ENCODE measurements at regions of chr14 and their contacts with region 1.

Region 1: DNA sequence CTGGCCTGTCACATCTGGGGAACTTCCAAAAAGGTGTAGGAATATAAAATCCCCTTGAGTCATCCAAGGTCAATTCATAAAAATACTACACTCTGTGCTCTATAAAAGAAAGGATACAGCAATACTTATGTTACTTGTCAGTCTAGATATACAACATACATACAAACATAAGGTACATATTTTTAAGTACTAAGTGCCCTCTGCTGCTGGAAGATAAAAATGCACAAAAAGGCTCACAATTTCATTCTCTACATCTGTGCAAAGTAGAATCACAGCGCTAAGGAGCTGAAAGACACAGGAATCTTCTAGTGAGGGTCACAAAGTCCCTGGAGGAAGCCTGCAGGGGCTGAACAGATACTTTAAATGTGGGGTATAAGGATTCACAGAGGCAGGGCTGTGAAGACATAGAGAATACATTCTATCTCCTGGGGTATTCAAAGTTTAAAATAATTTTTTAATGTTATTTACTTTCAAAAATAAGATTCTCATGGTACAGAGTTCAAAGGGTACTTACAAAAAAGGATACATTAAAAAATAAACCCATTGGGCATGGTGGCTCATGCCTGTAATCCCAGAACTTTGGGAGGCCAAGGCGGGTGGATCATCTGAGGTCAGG is 10.2 kb upstream of the GOLGA5 start:
- DNase-seq: no peak
- H3K4me3 Mint-ChIP-seq: no peak overlapping the region
- H3K27ac Mint-ChIP-seq: no peak overlapping the region
- H3K4me1 Mint-ChIP-seq: peaks cover 25% of the 10 kb centered on the region
- H3K27me3 Mint-ChIP-seq: no peaks in the 10 kb centered on the region

Region 2: GRCh38 chr14:92686900-92687444 is 97.0 kb before region 1 on chr14:
- CTCF ChIA-PET with region 1: interaction called, 14 read pairs
- POLR2A ChIA-PET with region 1: no interaction called
- DNase-seq: peak; percentile 60
- H3K4me3 Mint-ChIP-seq: no peak overlapping the region
- H3K27ac Mint-ChIP-seq: no peak overlapping the region
- H3K4me1 Mint-ChIP-seq: peaks cover 3% of the 10 kb centered on the region
- H3K27me3 Mint-ChIP-seq: no peaks in the 10 kb centered on the region

Region 3: DNA sequence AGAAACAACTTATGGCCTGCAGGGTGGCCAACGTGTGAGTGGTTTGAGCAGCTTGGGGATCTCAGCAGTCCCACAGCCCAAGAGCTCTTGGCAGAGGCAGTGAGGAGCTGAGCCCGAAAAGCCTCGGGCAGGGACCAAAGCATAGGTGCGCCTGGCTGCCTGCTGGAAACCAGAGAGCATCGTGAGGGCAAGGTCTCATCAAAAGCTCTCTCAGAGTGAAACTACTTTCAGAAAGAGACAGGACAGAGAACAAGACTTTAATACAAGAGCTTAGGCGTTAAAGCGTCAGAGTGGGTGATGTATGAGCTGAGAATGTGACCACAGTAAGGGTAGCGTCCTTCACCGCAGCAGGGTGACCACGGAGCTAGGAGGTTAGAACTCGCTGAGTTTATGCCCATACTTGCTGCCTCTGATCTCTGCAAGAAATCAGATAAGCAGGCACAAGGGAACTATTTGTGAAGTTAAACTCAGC is 66.3 kb before region 1 on chr14:
- CTCF ChIA-PET with region 1: interaction called, 82 read pairs
- POLR2A ChIA-PET with region 1: interaction called, 4 read pairs
- DNase-seq: peak; percentile 34
- H3K4me3 Mint-ChIP-seq: no peak overlapping the region
- H3K27ac Mint-ChIP-seq: no peak overlapping the region
- H3K4me1 Mint-ChIP-seq: peaks cover 9% of the 10 kb centered on the region
- H3K27me3 Mint-ChIP-seq: peaks cover 6% of the 10 kb centered on the region

Region 4: DNA sequence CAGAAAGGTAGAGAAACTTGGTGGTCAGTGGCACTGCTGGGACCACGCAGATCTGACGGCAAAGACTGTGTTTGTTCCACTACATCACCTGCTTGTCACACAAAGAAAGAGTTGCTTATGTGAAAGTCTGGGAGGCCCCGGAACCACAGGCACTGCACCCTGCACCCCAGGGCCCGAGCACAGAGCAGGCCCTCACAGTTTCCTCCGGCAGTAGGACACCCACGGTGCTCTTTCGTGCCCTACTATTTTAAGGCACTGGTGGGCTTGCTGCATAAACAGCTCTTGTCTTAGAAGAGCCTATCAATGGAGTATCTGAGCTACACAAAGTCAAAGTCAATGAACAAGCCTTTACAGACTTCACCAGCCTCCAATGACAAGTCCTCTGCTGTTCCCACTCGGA is 43.5 kb before region 1 on chr14:
- CTCF ChIA-PET with region 1: no interaction called
- POLR2A ChIA-PET with region 1: no interaction called
- DNase-seq: no peak
- H3K4me3 Mint-ChIP-seq: no peak overlapping the region
- H3K27ac Mint-ChIP-seq: no peak overlapping the region
- H3K4me1 Mint-ChIP-seq: peaks cover 5% of the 10 kb centered on the region
- H3K27me3 Mint-ChIP-seq: peaks cover 20% of the 10 kb centered on the region

Measured in activated CD4-positive, alpha-beta memory T cell treated with anti-CD3 and anti-CD28 coated beads, Interleukin-2, amount 10 ng/mL, durations not matched to agents 7 days and 5 days (primary cell).